GM12878 (cell line): ENCODE measurements at regions of chr2 and their contacts with region 1.

Region 1: GRCh38 chr2:173934895-173935294 is 30.3 kb downstream of the SP3 start:
- DNase-seq: no peak
- ATAC-seq: no peak
- H3K4me3 ChIP-seq: no peak overlapping the region
- H3K27ac ChIP-seq: no peak overlapping the region
- H3K4me1 ChIP-seq: peaks cover 4% of the 10 kb centered on the region
- H3K27me3 ChIP-seq: no peaks in the 10 kb centered on the region
- CTCF ChIP-seq: no peak
- EP300 ChIP-seq: no peak
- POLR2A ChIP-seq: no peak
- RAD21 ChIP-seq: no peak

Region 2: GRCh38 chr2:173982918-173983317 is 48.0 kb after region 1 on chr2:
- CTCF ChIA-PET with region 1: no interaction called
- POLR2A ChIA-PET with region 1: no interaction called
- RAD21 ChIA-PET with region 1: no interaction called
- SMC1A ChIA-PET with region 1: no interaction called
- in situ Hi-C with region 1: no loop called
- intact Hi-C with region 1: no loop called
- DNase-seq: no peak
- ATAC-seq: no peak
- H3K4me3 ChIP-seq: no peak overlapping the region
- H3K27ac ChIP-seq: no peak overlapping the region
- H3K4me1 ChIP-seq: no peaks in the 10 kb centered on the region
- H3K27me3 ChIP-seq: no peaks in the 10 kb centered on the region
- CTCF ChIP-seq: no peak
- EP300 ChIP-seq: no peak
- POLR2A ChIP-seq: no peak
- RAD21 ChIP-seq: no peak

Region 3: GRCh38 chr2:174001107-174001506 is 66.2 kb after region 1 on chr2:
- CTCF ChIA-PET with region 1: no interaction called
- POLR2A ChIA-PET with region 1: interaction called, 10 read pairs
- RAD21 ChIA-PET with region 1: no interaction called
- SMC1A ChIA-PET with region 1: no interaction called
- in situ Hi-C with region 1: no loop called
- intact Hi-C with region 1: no loop called
- DNase-seq: no peak
- ATAC-seq: no peak
- H3K4me3 ChIP-seq: no peak overlapping the region
- H3K27ac ChIP-seq: no peak overlapping the region
- H3K4me1 ChIP-seq: peaks cover 7% of the 10 kb centered on the region
- H3K27me3 ChIP-seq: no peaks in the 10 kb centered on the region
- CTCF ChIP-seq: no peak
- EP300 ChIP-seq: no peak
- POLR2A ChIP-seq: no peak
- RAD21 ChIP-seq: no peak

Region 4: DNA sequence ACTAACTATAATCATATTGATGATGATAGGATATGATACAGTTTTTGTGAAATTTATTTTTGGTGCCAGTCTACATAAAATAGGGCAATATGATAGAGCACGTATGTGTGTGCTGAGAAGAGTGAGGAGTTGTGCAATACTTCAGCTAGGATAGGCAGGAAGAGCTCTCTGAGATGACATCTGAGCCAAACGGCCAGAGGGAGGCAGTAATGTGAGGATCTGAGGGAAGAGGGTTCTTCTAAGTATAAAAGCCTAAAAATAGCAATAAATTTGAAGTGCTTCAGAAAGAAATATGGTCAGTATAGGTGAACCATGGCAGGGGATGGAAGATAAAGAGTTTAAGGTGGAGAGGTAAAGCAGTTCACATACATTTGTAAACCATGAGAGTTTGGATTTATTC is 210.9 kb after region 1 on chr2:
- CTCF ChIA-PET with region 1: no interaction called
- POLR2A ChIA-PET with region 1: no interaction called
- RAD21 ChIA-PET with region 1: no interaction called
- SMC1A ChIA-PET with region 1: no interaction called
- in situ Hi-C with region 1: no loop called
- intact Hi-C with region 1: no loop called
- DNase-seq: no peak
- ATAC-seq: peak; percentile 41; the same call in 2 of the 3 replicates
- H3K4me3 ChIP-seq: no peak overlapping the region
- H3K27ac ChIP-seq: no peak overlapping the region
- H3K4me1 ChIP-seq: no peaks in the 10 kb centered on the region
- H3K27me3 ChIP-seq: no peaks in the 10 kb centered on the region
- CTCF ChIP-seq: no peak
- EP300 ChIP-seq: no peak
- POLR2A ChIP-seq: no peak
- RAD21 ChIP-seq: no peak

Region 5: DNA sequence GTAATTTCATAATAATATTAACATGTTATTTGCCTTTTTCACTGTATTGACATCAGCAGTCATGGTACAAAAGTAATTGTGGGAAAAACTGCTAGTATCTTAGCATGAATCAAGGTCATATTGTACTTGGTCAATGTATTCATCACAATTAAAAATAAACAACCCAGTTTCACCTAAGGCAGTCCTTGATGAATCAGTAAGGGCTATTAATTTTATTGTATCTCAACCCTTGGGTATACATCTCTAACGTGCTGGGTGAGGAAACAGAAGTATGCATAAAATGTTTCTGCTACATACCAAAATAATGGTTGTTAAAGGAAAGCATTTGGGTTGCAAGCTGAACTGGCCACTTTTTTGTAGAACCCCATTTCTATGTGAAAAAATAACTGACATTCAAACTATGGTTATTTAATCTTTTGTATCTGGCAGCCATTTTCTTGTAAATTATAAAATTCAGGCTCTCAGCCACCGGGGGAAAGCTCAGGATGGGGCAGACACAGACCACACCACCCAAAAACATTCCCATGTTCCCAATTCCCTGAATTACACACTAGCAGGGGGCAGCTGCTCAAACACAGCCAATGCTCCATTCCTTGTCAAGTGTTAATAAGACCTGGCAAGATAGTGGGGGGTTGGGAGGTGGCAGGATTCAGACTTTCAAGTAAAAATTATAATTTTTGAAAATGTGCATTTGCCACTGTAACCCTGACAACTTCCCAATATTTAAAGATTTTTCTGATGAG is 264.1 kb after region 1 on chr2:
- CTCF ChIA-PET with region 1: no interaction called
- POLR2A ChIA-PET with region 1: no interaction called
- RAD21 ChIA-PET with region 1: no interaction called
- SMC1A ChIA-PET with region 1: no interaction called
- in situ Hi-C with region 1: no loop called
- intact Hi-C with region 1: no loop called
- DNase-seq: no peak
- ATAC-seq: no peak
- H3K4me3 ChIP-seq: no peak overlapping the region
- H3K27ac ChIP-seq: no peak overlapping the region
- H3K4me1 ChIP-seq: no peaks in the 10 kb centered on the region
- H3K27me3 ChIP-seq: no peaks in the 10 kb centered on the region
- CTCF ChIP-seq: no peak
- EP300 ChIP-seq: no peak
- POLR2A ChIP-seq: no peak
- RAD21 ChIP-seq: no peak